ENCODE measurements at regions of chr11 and their contacts with region 1.

Region 1: GRCh38 chr11:74954199-74954598 is 5.1 kb downstream of the SPCS2 start:
- DNase-seq: no peak
- ATAC-seq: no peak
- H3K4me3 Mint-ChIP-seq: no peak overlapping the region
- H3K27ac Mint-ChIP-seq: no peak overlapping the region
- H3K4me1 Mint-ChIP-seq: peaks cover 45 to 88% (median 81%) of the 10 kb centered on the region in 4 donors
- H3K27me3 Mint-ChIP-seq: no peaks in the 10 kb centered on the region

Region 2: DNA sequence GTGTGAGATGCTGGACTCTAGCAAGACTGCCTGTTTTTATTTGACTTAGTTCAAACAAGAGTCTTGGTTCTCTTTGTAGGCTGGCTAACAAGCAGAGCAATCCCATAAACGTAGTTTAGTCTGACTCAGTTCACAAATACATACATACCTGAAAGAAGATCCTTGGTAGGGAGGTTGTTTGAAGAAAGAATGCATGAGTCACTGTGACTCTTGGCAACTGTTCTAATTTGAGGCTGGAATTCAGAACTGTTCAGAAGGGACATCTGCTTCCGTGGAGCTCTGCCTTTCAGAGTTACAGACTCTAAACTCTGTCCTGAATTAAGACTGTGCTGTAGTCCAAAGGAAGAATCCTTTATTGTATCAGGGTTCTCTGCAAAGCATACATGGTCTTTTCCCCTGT is 815.6 kb before region 1 on chr11:
- POLR2A ChIA-PET with region 1: no interaction called
- DNase-seq: no peak
- ATAC-seq: no peak
- H3K4me3 Mint-ChIP-seq: no peak overlapping the region
- H3K27ac Mint-ChIP-seq: no peak overlapping the region
- H3K4me1 Mint-ChIP-seq: peaks cover 0 to 14% (median 5%) of the 10 kb centered on the region in 4 donors
- H3K27me3 Mint-ChIP-seq: no peaks in the 10 kb centered on the region

Region 3: DNA sequence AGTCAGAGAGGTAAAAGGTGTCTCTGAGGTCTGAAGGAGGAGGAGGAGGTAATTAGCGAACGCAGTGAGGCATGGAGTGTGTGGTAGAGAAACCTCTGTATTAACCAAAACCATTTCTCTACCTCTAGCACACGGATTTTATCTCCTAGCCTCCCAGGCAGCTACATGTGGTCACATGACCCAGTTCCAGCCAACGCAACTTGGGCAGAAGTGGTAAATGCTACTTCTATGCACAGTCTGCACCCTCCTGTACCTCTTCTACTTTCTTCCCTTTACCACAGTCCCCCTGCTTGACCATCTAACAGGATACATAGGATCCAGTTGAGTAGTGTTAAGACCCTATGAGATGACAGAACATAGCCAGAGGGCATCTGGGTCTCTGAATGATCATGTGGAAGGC is 101.0 kb before region 1 on chr11:
- POLR2A ChIA-PET with region 1: no interaction called
- DNase-seq: no peak
- ATAC-seq: no peak
- H3K4me3 Mint-ChIP-seq: no peak overlapping the region
- H3K27ac Mint-ChIP-seq: peak overlapping the region in 1 of 10 donors; percentile 69
- H3K4me1 Mint-ChIP-seq: peaks cover 0 to 5% (median 2%) of the 10 kb centered on the region in 4 donors
- H3K27me3 Mint-ChIP-seq: no peaks in the 10 kb centered on the region

Region 4: GRCh38 chr11:74988541-74989260 is 34.5 kb after region 1 on chr11 and contains the start of gene NEU3:
- POLR2A ChIA-PET with region 1: interaction called, 10 read pairs
- DNase-seq: peak; percentile 69 to 89 (median 80)
- ATAC-seq: peak; percentile 96
- H3K4me3 Mint-ChIP-seq: peak within 1 kb of the TSS; percentile 86 to 97 (median 94)
- H3K27ac Mint-ChIP-seq: peak within 1 kb of the TSS; percentile 77 to 95 (median 88)
- H3K4me1 Mint-ChIP-seq: peaks cover 16 to 34% (median 30%) of the 10 kb centered on the region in 4 donors
- H3K27me3 Mint-ChIP-seq: no peaks in the 10 kb centered on the region
- polyA plus RNA-seq, gene NEU3: 1.5 to 2.2 (median 1.8) TPM